Ascending aorta (tissue), 2 donors: ENCODE measurements at regions of chr6 and their contacts with region 1.

Region 1: DNA sequence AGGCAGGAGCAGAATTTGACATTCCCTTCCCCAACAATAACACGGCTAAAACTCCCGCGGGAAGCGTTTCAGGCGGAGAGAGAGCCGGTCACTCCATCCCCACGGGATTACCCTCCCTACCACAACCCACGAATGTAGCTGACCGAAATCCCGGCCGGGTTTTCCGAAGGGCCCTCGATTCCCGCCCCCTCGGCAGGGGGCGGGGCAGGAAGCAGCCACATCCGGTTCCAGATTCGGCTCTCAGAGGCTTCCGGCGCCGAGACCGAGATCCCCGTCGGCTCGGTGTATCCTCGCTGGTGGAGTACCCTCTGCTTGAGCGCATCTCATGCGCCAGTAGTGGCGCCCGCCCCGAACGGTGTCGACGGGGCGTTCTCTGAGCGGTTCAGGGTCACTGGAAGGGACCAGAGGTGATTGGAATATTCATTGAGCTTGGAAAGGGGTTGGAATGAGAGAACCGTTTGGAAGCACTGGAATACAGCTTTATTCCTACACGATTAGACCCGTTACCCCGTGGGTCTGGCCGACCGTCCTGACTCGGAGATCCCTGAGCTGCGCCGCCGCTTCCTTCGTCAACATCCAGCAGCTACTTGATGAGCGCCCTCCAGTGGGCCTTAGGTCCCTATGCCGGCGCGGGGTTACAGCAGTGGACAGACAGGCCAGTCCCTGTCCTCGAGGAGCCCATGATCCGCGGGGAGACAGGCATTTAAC is 649 bp upstream of the RGL2 start:
- DNase-seq: peak in 1 of 2 donors; percentile 94
- H3K4me3 ChIP-seq: peak overlapping the region; percentile 96 to 97
- H3K27ac ChIP-seq: peak overlapping the region; percentile 97 to 98
- H3K4me1 ChIP-seq: peaks cover 7 to 18% of the 10 kb centered on the region in 2 donors
- H3K27me3 ChIP-seq: no peaks in the 10 kb centered on the region
- CTCF ChIP-seq: peak; percentile 65 to 76 (median 75)

Region 2: GRCh38 chr6:33200219-33201146 is 98.9 kb before region 1 on chr6 and contains the starts of genes RXRB and SLC39A7:
- intact Hi-C with region 1: loop called (anchors 1 kb)
- DNase-seq: peak; percentile 99 to 100
- H3K4me3 ChIP-seq: peak within 1 kb of the TSS; percentile 90 to 91
- H3K27ac ChIP-seq: peak within 1 kb of the TSS; percentile 95 to 97
- H3K4me1 ChIP-seq: peaks cover 16 to 32% of the 10 kb centered on the region in 2 donors
- H3K27me3 ChIP-seq: no peaks in the 10 kb centered on the region
- CTCF ChIP-seq: no peak
- total RNA-seq, gene RXRB: 21.6 TPM
- total RNA-seq, gene SLC39A7: 59.7 TPM

Region 3: DNA sequence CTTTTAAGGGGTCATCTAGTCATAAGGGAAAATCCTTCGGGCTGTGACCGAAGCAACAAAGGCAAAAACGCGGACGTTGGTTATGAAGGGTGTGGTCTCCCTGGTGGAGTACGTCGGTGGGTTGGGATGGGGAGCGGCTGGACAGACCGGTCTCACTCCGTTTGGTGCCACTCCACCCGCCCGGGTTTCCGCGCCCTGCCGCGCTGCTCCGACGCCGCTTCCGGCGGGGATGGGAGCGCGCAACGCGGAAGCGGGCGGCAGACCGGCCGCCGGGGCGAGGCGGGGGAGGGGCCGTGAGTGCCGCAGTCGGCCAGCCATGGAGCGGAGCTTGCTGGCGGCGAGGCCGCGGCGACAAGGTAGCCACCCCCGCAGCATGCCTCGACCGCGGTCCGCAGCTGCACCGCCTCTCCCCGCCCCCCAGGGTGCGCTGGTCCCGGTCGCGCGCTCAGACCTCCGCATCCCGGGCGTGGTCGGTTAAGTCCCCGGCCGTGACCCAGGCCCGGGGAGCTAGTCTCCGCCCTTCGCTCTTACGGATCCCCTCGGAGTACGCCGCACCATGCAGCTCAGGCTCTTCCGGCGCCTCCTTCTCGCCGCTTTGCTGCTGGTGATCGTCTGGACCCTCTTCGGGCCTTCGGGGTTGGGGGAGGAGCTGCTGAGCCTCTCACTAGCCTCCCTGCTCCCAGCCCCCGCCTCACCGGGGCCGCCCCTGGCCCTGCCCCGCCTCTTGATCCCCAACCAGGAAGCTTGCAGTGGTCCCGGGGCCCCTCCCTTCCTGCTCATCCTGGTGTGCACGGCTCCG is 22.3 kb before region 1 on chr6 and contains the start of gene B3GALT4:
- intact Hi-C with region 1: loop called (anchors 1 kb)
- DNase-seq: peak in 1 of 2 donors; percentile 84
- H3K4me3 ChIP-seq: peak within 1 kb of the TSS; percentile 69 to 80
- H3K27ac ChIP-seq: peak within 1 kb of the TSS; percentile 85 to 93
- H3K4me1 ChIP-seq: peaks cover 9 to 36% of the 10 kb centered on the region in 2 donors
- H3K27me3 ChIP-seq: no peaks in the 10 kb centered on the region
- CTCF ChIP-seq: peak; percentile 55 to 61 (median 57)
- total RNA-seq, gene B3GALT4: 15.9 TPM

Region 4: GRCh38 chr6:33288921-33289748 is 10.3 kb before region 1 on chr6 and contains the starts of genes PFDN6 and WDR46:
- intact Hi-C with region 1: loop called (anchors 1 kb)
- DNase-seq: peak; percentile 45 to 92
- H3K4me3 ChIP-seq: peak within 1 kb of the TSS; percentile 79 to 80
- H3K27ac ChIP-seq: peak within 1 kb of the TSS; percentile 56 to 76
- H3K4me1 ChIP-seq: peaks cover 3 to 20% of the 10 kb centered on the region in 2 donors
- H3K27me3 ChIP-seq: no peaks in the 10 kb centered on the region
- CTCF ChIP-seq: no peak
- total RNA-seq, gene PFDN6: 11.3 TPM
- total RNA-seq, gene WDR46: 70.6 TPM

Region 5: GRCh38 chr6:33317669-33318425 is 18.5 kb after region 1 on chr6 and contains the start of gene ZBTB22:
- intact Hi-C with region 1: loop called (anchors 1 kb)
- DNase-seq: peak; percentile 99 to 100
- H3K4me3 ChIP-seq: peak within 1 kb of the TSS; percentile 59 to 64
- H3K27ac ChIP-seq: peak within 1 kb of the TSS; percentile 75 to 93
- H3K4me1 ChIP-seq: peaks cover 20 to 49% of the 10 kb centered on the region in 2 donors
- H3K27me3 ChIP-seq: no peaks in the 10 kb centered on the region
- CTCF ChIP-seq: no peak
- total RNA-seq, gene ZBTB22: 35.5 TPM

Region 6: GRCh38 chr6:33425668-33426577 is 126.5 kb after region 1 on chr6:
- intact Hi-C with region 1: loop called (anchors 5 kb)
- DNase-seq: peak; percentile 56 to 92
- H3K4me3 ChIP-seq: peak overlapping the region; percentile 53 to 79
- H3K27ac ChIP-seq: peak overlapping the region; percentile 92 to 95
- H3K4me1 ChIP-seq: peaks cover 17 to 23% of the 10 kb centered on the region in 2 donors
- H3K27me3 ChIP-seq: no peaks in the 10 kb centered on the region
- CTCF ChIP-seq: peak; percentile 27 to 74 (median 63)